Calu3 (cell line): ENCODE measurements at regions of chr3 and their contacts with region 1.

Region 1: GRCh38 chr3:190224863-190225692 is 97.2 kb downstream of the CLDN1 start:
- DNase-seq: peak; percentile 37
- H3K4me3 Mint-ChIP-seq: no peak overlapping the region
- H3K27ac Mint-ChIP-seq: no peak overlapping the region
- H3K4me1 Mint-ChIP-seq: peaks cover 7% of the 10 kb centered on the region
- H3K27me3 Mint-ChIP-seq: no peaks in the 10 kb centered on the region
- CTCF ChIP-seq: peak; percentile 58

Region 2: DNA sequence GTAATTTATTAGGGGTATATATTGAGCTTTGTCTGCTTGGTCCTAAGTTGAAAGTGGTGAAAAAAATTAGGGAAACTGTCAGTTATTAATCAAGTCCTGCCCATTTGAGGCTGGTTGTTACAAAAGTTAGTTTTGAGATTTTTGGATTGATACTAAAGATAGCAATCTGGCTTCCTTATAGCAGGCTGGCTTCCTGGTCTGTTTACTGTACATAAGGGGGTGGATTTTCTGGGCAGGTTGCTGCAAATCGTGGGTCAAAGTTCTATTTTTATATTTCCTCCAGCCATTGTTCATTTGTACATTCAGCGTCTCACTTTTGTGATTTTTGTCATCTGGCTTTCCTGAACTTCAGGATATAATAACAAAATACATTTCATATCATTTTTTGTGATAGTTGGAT is 47.6 kb after region 1 on chr3:
- CTCF ChIA-PET with region 1: no interaction called
- intact Hi-C with region 1: no loop called
- DNase-seq: no peak
- H3K4me3 Mint-ChIP-seq: no peak overlapping the region
- H3K27ac Mint-ChIP-seq: no peak overlapping the region
- H3K4me1 Mint-ChIP-seq: peaks cover 14% of the 10 kb centered on the region
- H3K27me3 Mint-ChIP-seq: no peaks in the 10 kb centered on the region
- CTCF ChIP-seq: no peak

Region 3: GRCh38 chr3:190306513-190307165 is 81.6 kb after region 1 on chr3:
- CTCF ChIA-PET with region 1: interaction called, 7 read pairs
- intact Hi-C with region 1: loop called (anchors 2 kb)
- DNase-seq: peak; percentile 67
- H3K4me3 Mint-ChIP-seq: peak overlapping the region; percentile 51
- H3K27ac Mint-ChIP-seq: peak overlapping the region; percentile 90
- H3K4me1 Mint-ChIP-seq: peaks cover 61% of the 10 kb centered on the region
- H3K27me3 Mint-ChIP-seq: no peaks in the 10 kb centered on the region
- CTCF ChIP-seq: no peak

Region 4: GRCh38 chr3:190378240-190378891 is 153.3 kb after region 1 on chr3:
- CTCF ChIA-PET with region 1: no interaction called
- intact Hi-C with region 1: no loop called
- DNase-seq: no peak
- H3K4me3 Mint-ChIP-seq: no peak overlapping the region
- H3K27ac Mint-ChIP-seq: no peak overlapping the region
- H3K4me1 Mint-ChIP-seq: peaks cover 83% of the 10 kb centered on the region
- H3K27me3 Mint-ChIP-seq: no peaks in the 10 kb centered on the region
- CTCF ChIP-seq: no peak

Region 5: DNA sequence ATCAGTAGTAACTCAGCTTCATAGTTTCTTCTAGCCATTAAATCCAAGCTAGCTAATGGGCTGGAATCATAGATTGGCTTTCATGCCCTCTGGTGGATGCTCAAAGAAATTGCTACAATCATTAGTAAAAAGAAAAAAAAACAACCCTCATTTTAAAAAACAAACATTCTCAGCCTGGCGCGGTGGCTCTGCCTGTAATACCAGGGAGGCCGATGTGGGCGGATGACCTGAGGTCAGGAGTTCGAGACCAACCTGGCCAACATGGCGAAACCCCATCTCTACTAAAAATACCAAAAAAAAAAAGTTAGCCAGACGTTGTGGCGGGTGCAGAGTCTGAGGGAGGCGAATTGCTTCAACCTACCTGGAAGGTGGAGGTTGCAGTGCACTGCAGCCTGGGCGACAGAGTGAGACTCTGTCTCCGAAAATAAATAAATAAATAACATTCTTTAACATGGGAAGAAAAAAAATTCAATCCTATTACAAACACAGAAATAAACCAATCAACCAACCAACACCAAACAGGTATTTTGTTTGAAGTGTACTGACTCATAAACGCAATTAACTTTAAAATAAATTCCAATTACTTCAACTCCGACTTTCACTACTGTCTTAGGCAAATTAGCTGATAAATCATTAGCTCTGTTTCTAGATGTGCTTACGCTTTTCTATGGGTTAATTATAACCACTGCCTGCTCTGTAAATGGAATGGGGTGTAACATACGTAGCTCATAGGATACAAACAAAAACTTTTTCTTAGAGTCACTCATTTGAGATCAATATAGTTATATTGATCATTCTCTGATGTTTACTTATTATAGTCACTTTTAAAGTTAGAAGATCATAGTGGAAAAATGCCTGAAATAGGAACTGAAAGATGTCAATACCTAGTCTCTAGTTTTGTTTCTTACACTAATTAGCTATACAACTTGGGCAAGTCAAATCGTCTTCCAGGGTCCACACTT is 199.7 kb after region 1 on chr3:
- CTCF ChIA-PET with region 1: interaction called, 5 read pairs
- intact Hi-C with region 1: loop called (anchors 2 kb)
- DNase-seq: peak; percentile 86
- H3K4me3 Mint-ChIP-seq: peak overlapping the region; percentile 44
- H3K27ac Mint-ChIP-seq: peak overlapping the region; percentile 94
- H3K4me1 Mint-ChIP-seq: peaks cover 12% of the 10 kb centered on the region
- H3K27me3 Mint-ChIP-seq: no peaks in the 10 kb centered on the region
- CTCF ChIP-seq: peak; percentile 69

Region 6: DNA sequence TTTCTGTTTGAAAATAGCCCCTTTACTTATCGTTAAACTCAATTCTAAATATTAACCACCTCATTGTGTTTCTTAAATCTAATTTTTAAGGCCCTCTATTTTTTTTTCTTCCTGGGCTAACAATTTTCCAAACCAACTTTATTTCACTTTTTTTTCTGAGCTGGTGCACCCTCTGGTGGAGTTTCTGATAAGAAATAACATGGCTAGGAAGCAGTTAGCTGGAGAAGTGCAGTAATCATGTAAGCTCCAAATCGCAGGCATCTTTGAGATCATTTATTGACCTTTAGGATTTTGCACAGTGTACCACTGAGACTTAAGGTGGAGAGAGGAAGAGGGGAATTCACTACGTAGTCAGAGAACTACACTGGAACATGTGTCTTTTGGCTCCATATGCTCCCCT is 218.2 kb after region 1 on chr3:
- CTCF ChIA-PET with region 1: no interaction called
- intact Hi-C with region 1: loop called (anchors 5 kb)
- DNase-seq: peak; percentile 48
- H3K4me3 Mint-ChIP-seq: no peak overlapping the region
- H3K27ac Mint-ChIP-seq: peak overlapping the region; percentile 44
- H3K4me1 Mint-ChIP-seq: peaks cover 47% of the 10 kb centered on the region
- H3K27me3 Mint-ChIP-seq: no peaks in the 10 kb centered on the region
- CTCF ChIP-seq: peak; percentile 64